Transverse colon (tissue), 4 donors: ENCODE measurements at regions of chr15 and their contacts with region 1.

Region 1: DNA sequence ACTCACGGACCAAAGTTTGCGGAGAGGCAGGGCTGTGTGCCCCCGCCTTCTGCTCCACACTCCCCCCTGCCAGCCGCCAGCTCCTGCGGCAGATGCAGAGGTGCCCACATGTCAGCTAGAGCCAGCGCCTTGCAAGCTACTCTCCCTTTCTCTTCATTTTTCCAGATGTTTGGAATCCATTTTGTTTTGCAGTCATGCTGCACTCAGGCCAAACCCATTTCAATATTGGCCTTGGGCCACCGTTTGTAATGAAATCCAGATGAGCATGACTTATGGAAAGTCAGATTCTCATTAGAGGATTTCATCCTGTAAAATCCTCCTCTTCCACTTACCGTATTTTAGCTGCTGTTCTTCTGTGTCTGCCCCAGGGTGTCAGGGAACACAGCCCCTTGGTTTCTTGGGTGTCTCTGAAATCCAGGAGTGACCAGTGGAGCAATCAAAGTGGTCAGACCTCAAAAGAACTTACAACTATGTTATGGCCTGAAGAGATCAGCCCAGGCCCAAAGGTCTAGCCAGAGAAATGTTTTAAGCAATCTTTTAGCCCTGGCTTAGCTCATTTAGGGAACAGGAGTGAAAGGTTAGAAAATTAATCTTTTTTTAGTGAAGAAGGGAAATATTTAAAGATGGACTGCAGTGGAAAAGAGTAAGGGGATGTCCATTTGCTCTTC is 65.8 kb downstream of the AAGAB start:
- DNase-seq: no peak
- H3K4me3 ChIP-seq: no peak overlapping the region
- H3K27ac ChIP-seq: peak overlapping the region; percentile 63 to 78 (median 72)
- H3K4me1 ChIP-seq: peaks cover 10 to 39% (median 18%) of the 10 kb centered on the region in 4 donors
- H3K27me3 ChIP-seq: no peaks in the 10 kb centered on the region
- CTCF ChIP-seq: no peak
- EP300 ChIP-seq: no peak
- POLR2A ChIP-seq: no peak

Region 2: GRCh38 chr15:66802087-66803001 is 386.3 kb before region 1 on chr15:
- in situ Hi-C with region 1: no loop called
- intact Hi-C with region 1: no loop called
- DNase-seq: no peak
- H3K4me3 ChIP-seq: no peak overlapping the region
- H3K27ac ChIP-seq: peak overlapping the region; percentile 71 to 81 (median 74)
- H3K4me1 ChIP-seq: peaks cover 17 to 20% (median 19%) of the 10 kb centered on the region in 4 donors
- H3K27me3 ChIP-seq: no peaks in the 10 kb centered on the region
- CTCF ChIP-seq: no peak
- EP300 ChIP-seq: no peak
- POLR2A ChIP-seq: no peak

Region 3: DNA sequence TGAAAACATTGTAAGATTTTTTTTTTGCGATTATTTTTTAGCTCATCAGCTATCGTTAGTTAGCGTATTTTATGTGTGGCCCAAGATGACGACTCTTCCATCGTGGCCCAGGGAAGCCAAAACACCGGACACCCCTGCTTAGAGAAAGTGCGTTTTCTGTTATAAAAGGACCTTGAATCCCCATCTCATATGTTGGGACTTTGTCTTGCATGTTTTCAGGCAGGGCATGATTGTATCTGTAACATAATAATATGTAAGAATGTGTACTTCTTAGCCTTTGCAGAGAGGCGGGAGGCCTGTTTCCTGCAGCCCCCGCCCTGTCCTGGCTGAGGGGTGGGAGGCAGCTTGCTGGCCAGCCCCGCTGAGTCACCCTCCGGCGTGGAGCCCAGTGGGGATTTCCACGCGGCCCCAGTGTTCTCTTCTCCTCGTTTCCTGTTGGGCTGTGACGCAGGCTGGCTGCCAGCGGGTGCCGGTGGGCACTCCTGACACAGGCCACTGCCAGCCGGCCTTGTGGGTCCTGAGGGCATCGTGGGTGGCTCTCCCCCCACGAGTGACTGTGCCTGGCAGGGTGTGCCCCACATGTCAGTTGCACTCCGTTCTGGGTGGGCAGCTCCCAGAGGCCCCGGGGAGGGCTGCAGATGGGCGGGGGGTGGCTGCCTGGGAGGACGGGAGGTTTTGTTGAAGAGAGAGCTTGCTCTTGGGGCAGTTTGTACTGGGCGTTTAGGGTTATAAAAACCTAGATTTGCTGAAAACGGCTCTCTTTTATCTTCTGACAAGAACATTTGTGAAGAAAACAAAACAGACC is 67.6 kb before region 1 on chr15:
- in situ Hi-C with region 1: no loop called
- intact Hi-C with region 1: loop called (anchors 10 kb)
- DNase-seq: peak; percentile 91
- H3K4me3 ChIP-seq: peak overlapping the region in 3 of 4 donors; percentile 11 to 15 (median 14)
- H3K27ac ChIP-seq: peak overlapping the region; percentile 82 to 91 (median 84)
- H3K4me1 ChIP-seq: peaks cover 41 to 81% (median 51%) of the 10 kb centered on the region in 4 donors
- H3K27me3 ChIP-seq: no peaks in the 10 kb centered on the region
- CTCF ChIP-seq: no peak
- EP300 ChIP-seq: peak; percentile 41
- POLR2A ChIP-seq: peak; percentile 41

Region 4: DNA sequence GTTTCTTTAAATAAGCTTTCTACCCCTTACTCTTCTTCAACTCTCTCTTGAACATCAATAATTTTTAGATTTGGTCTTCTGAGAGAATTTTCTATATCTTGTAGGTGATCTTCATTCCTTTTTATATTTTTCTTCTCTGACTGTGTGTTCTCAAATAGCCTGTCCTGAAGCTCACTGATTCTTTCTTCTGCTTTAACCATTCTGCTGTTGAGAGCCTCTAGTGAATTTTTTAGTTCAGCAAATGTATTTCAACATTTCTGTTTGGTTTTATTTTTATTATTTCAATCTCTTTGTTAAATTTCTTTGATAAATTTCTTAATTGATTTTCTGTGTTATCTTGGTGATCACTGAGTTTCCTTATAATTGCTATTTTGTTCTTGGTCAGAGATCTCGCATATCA is 85.6 kb after region 1 on chr15:
- in situ Hi-C with region 1: no loop called
- intact Hi-C with region 1: no loop called
- DNase-seq: no peak
- H3K4me3 ChIP-seq: no peak overlapping the region
- H3K27ac ChIP-seq: no peak overlapping the region
- H3K4me1 ChIP-seq: no peaks in the 10 kb centered on the region
- H3K27me3 ChIP-seq: no peaks in the 10 kb centered on the region
- CTCF ChIP-seq: no peak
- EP300 ChIP-seq: no peak
- POLR2A ChIP-seq: no peak

Region 5: DNA sequence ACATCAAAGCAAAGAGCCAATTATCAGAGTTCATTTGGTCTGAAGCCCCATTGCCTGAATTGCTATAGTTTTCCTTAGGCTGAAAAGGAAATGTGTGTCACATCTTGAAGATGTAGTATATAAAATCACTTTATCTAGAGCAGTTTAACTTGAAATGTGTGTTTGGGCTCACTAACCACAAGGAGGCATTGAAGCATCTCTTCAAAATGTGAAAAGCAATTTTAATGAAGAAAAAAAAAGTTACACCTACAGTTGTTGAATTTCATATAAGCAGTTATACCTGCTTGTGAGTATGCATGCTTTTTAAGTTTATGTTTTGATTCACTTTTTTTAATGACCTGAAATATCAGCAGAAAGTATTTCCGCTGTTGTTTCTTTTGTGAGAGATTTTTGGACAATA is 195.2 kb after region 1 on chr15:
- in situ Hi-C with region 1: no loop called
- intact Hi-C with region 1: no loop called
- DNase-seq: no peak
- H3K4me3 ChIP-seq: no peak overlapping the region
- H3K27ac ChIP-seq: no peak overlapping the region
- H3K4me1 ChIP-seq: no peaks in the 10 kb centered on the region
- H3K27me3 ChIP-seq: no peaks in the 10 kb centered on the region
- CTCF ChIP-seq: no peak
- EP300 ChIP-seq: no peak
- POLR2A ChIP-seq: no peak